ENCODE measurements at regions of chr3 and their contacts with region 1.

Region 1: DNA sequence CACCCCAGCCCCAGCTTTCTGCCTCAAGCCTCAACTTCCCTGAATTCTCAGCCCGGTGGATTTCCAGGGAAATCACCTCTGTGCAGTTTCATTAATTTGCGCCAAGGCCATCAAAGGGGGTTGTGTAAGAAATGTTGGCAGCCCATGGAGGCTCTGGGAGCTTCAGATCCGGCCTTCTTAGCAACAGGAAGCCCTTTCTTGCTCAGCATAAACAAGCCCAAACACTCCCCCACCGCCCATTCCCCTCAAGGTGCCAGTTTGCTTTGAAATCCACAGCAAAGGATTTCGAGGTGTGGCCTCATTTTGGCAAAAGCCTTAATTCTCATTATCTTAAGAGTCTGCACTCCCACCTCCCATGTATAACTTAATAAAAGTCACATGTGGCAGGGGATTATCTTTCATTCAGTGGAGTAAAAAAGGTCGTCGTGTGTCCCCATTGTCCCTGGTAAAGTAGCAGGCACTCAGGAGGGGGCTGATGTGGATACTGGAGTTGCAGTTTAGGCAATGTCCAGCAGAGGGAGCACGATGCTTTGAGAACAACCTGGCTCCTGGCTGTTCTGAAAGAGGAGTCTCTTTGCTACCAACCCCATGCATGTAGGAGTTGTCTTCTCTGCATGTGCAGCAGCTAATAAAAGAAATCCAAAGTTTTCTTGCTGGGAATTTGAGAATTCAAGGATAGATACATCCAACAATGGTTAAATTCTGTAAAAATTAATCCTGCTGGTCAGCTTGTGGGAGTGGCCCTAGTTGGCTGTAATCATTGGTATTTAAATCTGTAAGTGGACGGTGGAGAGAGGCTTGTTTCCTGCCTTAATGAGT is 39.5 kb downstream of the EBLN2 start:
- DNase-seq: peak; percentile 90
- CTCF ChIP-seq: peak; percentile 84

Region 2: GRCh38 chr3:73432023-73432705 is 331.2 kb after region 1 on chr3:
- in situ Hi-C with region 1: loop called (anchors 10 kb)
- DNase-seq: peak; percentile 48
- CTCF ChIP-seq: peak; percentile 20

Region 3: DNA sequence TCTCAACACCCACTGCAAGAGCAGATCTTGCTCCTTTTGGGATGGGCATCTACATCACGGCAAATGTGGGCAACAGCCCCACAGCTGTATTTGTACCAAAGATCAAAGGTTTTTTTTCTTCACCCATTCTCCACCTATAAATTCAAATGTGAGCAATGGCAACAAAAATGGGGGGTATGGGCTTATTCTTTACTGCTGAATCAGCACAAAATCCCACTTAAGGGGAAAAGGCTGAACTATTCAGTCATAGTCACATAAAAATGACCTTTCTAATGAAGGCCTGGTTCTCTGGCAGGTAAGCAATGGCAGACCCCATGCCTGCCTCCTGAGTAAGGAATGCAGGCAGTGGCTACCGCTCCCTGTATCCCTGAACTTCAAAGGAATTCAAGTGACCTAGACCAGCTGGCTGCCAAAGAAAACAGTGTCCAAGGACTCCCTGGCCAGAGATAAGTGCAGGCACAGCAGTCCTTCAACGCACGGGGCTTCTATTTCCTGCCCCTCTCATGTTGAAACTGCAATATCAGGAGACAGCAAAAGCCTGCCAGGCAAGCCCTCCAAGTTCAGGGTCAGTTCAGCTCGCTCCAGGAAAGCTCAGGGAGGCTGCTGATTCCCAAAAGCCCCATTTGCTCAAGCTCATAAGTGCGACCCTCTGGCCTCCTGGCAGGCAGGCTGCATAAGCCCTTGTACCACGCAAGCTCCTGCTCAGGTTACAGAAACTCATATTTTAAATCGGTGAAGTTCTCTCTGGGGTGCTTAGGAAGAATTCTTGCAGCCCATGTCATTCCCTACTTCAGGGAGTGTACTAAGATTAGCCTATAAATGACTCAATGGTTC is 389.7 kb after region 1 on chr3:
- in situ Hi-C with region 1: loop called (anchors 10 kb)
- DNase-seq: no peak
- CTCF ChIP-seq: no peak

Measured in GM13976 (cell line).